ENCODE measurements at regions of chr12 and their contacts with region 1.

Region 1: GRCh38 chr12:56694161-56694560 is 6.1 kb upstream of the PTGES3 start:
- DNase-seq: no peak
- H3K4me3 ChIP-seq: no peak overlapping the region
- H3K27ac ChIP-seq: no peak overlapping the region
- H3K4me1 ChIP-seq: no peaks in the 10 kb centered on the region; the same call in 1 of the 2 replicates
- H3K27me3 ChIP-seq: no peaks in the 10 kb centered on the region
- CTCF ChIP-seq: no peak

Region 2: DNA sequence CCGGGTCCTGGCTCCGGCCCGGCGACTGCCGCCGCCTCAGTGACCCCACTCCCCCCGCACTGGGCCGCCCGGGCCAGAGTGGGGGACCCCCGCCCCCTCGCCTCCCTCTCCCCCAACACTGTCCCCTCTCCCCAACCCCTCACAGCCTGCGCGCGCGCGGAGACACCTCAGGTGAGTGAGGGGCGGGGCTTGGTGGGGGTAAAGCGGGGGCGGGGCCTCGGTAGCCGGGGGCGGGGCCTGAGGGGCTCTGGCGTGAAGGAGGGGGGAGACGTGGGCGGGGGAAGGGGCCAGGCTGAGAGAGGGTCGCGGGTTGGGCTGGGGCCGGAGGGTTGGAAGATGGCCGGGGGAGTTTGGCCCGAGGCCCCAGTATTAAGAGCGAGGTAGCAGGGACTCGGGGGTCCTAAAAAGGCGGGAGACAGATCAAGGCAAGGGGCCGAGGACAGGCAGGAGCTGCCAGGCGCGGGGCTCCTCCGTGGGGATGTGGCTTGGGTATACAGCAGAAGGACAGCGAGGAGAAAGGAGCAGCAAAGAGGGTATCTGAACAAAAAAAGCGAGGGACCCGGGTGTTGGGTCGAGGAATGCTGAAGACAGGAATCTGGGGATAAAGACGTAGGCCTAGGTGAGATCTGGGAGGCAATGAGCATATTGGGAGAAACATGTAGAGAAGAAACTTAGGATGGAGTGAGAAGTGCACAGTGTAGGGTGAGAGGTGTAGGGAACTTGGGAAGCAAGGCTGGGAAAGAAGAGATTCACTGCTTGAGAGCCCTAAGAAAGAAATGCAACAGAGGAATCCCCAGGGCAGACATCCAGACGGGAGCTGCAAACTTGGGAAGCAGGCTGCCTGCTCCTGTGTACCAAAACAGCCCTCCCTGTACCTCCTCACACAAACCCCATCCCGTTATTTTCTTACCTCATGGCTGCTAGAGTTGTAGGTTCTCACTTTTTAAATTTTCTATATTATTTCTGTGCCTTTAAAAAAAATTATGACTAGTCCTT is 686.3 kb before region 1 on chr12:
- CTCF ChIA-PET with region 1: no interaction called
- POLR2A ChIA-PET with region 1: no interaction called
- intact Hi-C with region 1: no loop called
- DNase-seq: peak in 1 of 2 experiments; percentile 65
- H3K4me3 ChIP-seq: peak overlapping the region; percentile 63
- H3K27ac ChIP-seq: peak overlapping the region; percentile 52; the same call in 1 of the 2 replicates
- H3K4me1 ChIP-seq: peaks cover 13% of the 10 kb centered on the region
- H3K27me3 ChIP-seq: no peaks in the 10 kb centered on the region
- CTCF ChIP-seq: no peak

Region 3: DNA sequence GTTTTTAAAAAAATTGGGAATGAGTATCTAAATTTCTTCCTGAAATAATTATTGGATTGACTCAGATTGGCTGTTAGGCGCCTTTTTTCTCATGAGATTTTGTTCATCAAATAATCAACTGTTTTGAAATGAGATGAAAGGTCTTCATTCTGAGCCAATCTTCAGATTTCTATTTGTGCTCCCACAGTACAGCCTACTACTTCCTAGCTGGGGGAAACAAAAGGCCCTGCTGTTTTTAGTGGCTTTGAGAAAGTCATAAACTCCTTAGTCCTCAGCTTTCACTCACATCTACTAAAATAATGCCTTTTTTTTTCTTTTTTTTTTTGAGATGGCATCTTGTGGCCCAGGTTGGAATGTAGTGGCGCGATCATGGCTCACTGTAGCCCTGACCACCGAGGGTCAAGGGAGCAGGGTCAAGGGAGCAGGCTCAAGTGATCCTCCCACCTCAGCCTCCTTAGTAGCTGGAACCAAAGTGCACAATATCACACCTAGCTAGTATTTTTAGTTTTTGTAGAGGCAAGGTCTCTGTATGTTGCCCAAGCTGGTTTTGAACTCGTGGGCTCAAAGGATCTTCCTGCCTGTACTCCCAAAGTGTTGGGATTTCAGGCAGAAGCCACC is 15.7 kb after region 1 on chr12:
- CTCF ChIA-PET with region 1: interaction called, 14 read pairs
- POLR2A ChIA-PET with region 1: interaction called, 5 read pairs
- intact Hi-C with region 1: no loop called
- DNase-seq: no peak
- H3K4me3 ChIP-seq: no peak overlapping the region
- H3K27ac ChIP-seq: no peak overlapping the region
- H3K4me1 ChIP-seq: no peaks in the 10 kb centered on the region
- H3K27me3 ChIP-seq: no peaks in the 10 kb centered on the region
- CTCF ChIP-seq: no peak